Activated T-helper 2 cell treated with anti-CD3 and anti-CD28 coated beads, Interferon-gamma antibody, Interleukin-2, Interleukin-4, amounts not matched to agents 10 μg/mL and 5 μg/mL and 100 μg/mL, durations not matched to agents 14 hours and 24 hours and 36 hours (primary cell): ENCODE measurements at regions of chr19 and their contacts with region 1.

Region 1: DNA sequence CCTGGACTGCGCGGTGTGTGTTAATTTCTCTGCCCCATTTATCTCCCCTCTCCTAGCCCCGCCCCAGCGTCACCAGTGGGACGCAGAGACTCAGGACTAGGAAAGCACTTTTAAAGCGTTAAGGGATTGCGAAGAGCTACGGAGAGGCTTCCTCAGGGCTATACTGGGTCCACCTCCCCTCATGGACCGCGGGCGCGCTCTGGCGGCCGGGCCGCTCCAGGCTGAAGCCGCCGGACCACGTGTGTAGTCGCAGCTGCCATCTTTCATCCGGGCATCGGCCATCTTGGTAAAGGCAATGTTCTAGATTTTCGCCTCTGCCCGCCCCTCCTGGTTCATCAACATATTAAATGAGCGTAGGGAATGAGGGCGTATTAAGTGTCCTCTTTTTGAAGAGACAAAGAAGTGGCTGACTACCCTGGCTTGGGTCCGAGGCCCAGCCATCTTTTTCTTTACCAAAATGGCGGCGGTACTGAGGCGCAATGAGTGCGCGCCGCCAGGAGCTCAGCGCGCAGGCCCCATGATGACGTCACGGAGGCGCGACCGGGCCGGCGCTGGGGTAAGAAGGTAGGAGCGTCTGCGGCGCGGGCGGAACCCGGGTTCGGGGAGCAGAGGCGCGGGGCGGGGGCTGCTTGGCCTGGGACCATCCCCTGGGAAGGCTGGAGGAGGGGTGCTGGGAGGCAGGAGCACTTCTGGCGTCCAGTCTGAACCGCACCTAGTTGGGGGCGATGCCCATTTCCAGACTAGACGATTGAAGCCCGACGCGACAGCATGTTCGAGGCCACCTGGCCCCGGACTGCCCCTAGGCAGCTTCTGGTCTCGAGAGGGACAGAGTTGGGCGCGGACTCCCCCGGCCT is at the start of gene CCDC124:
- DNase-seq: peak; percentile 89
- H3K4me3 Mint-ChIP-seq: peak within 1 kb of the TSS; percentile 97
- H3K27ac Mint-ChIP-seq: peak within 1 kb of the TSS; percentile 94
- H3K4me1 Mint-ChIP-seq: peaks cover 14% of the 10 kb centered on the region
- H3K27me3 Mint-ChIP-seq: no peaks in the 10 kb centered on the region
- total RNA-seq, gene CCDC124: 116 and 123 TPM in 2 replicates

Region 2: GRCh38 chr19:17873786-17874757 is 58.6 kb before region 1 on chr19:
- intact Hi-C with region 1: loop called (anchors 2 kb)
- DNase-seq: peak; percentile 56
- H3K4me3 Mint-ChIP-seq: peak overlapping the region; percentile 57
- H3K27ac Mint-ChIP-seq: peak overlapping the region; percentile 38
- H3K4me1 Mint-ChIP-seq: peaks cover 2% of the 10 kb centered on the region
- H3K27me3 Mint-ChIP-seq: peaks cover 2% of the 10 kb centered on the region

Region 3: GRCh38 chr19:17947815-17948513 is 15.3 kb after region 1 on chr19:
- intact Hi-C with region 1: loop called (anchors 2 kb)
- DNase-seq: peak; percentile 94
- H3K4me3 Mint-ChIP-seq: peak overlapping the region; percentile 75
- H3K27ac Mint-ChIP-seq: no peak overlapping the region
- H3K4me1 Mint-ChIP-seq: peaks cover 32% of the 10 kb centered on the region
- H3K27me3 Mint-ChIP-seq: peaks cover 34% of the 10 kb centered on the region